ENCODE measurements at regions of chr7 and their contacts with region 1.

Region 1: DNA sequence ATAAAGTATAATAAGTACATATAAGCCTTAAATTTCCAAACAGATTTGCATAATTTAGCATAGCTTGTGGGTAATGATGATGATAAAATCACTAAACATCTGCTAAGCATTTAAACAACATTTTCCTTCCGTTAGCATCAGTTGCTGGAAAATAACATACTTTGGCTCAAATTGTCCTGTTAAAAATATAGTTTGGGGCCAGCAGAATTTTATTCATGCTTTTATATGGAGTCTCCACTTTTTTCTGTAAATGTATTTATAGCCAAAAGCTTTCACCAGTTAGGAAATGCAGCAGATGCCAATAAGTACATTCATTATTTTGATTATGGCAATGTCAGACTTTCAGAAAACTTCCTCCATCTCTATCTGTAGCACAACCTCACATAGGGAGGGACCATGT is 107.2 kb downstream of the CNTNAP2 start:
- DNase-seq: no peak
- H3K4me3 ChIP-seq: no peak overlapping the region
- H3K27ac ChIP-seq: no peak overlapping the region
- H3K4me1 ChIP-seq: no peaks in the 10 kb centered on the region
- CTCF ChIP-seq: no peak

Region 2: GRCh38 chr7:145893925-145894535 is 329.8 kb before region 1 on chr7:
- CTCF ChIA-PET with region 1: no interaction called
- POLR2A ChIA-PET with region 1: interaction called, 12 read pairs
- intact Hi-C with region 1: no loop called
- DNase-seq: no peak
- H3K4me3 ChIP-seq: no peak overlapping the region
- H3K27ac ChIP-seq: no peak overlapping the region
- H3K4me1 ChIP-seq: no peaks in the 10 kb centered on the region
- CTCF ChIP-seq: no peak